Activated CD4-positive, alpha-beta memory T cell treated with anti-CD3 and anti-CD28 coated beads for 36 hours (primary cell): ENCODE measurements at regions of chr12 and their contacts with region 1.

Region 1: GRCh38 chr12:24754690-24755638 is 193.9 kb downstream of the BCAT1 start:
- DNase-seq: peak; percentile 42
- H3K4me3 Mint-ChIP-seq: no peak overlapping the region
- H3K27ac Mint-ChIP-seq: peak overlapping the region; percentile 73
- H3K4me1 Mint-ChIP-seq: peaks cover 30% of the 10 kb centered on the region
- H3K27me3 Mint-ChIP-seq: peaks cover 7% of the 10 kb centered on the region

Region 2: GRCh38 chr12:24742378-24742777 is 12.6 kb before region 1 on chr12:
- CTCF ChIA-PET with region 1: interaction called, 5 read pairs
- POLR2A ChIA-PET with region 1: no interaction called
- intact Hi-C with region 1: loop called (anchors 1 kb)
- DNase-seq: peak; percentile 70
- H3K4me3 Mint-ChIP-seq: no peak overlapping the region
- H3K27ac Mint-ChIP-seq: peak overlapping the region; percentile 76
- H3K4me1 Mint-ChIP-seq: peaks cover 23% of the 10 kb centered on the region
- H3K27me3 Mint-ChIP-seq: peaks cover 3% of the 10 kb centered on the region

Region 3: GRCh38 chr12:24767016-24767415 is 12.1 kb after region 1 on chr12:
- CTCF ChIA-PET with region 1: no interaction called
- POLR2A ChIA-PET with region 1: interaction called, 7 read pairs
- intact Hi-C with region 1: loop called (anchors 1 kb)
- DNase-seq: peak; percentile 36
- H3K4me3 Mint-ChIP-seq: no peak overlapping the region
- H3K27ac Mint-ChIP-seq: peak overlapping the region; percentile 69
- H3K4me1 Mint-ChIP-seq: peaks cover 13% of the 10 kb centered on the region
- H3K27me3 Mint-ChIP-seq: peaks cover 6% of the 10 kb centered on the region